ENCODE measurements at regions of chr2 and their contacts with region 1.

Region 1: DNA sequence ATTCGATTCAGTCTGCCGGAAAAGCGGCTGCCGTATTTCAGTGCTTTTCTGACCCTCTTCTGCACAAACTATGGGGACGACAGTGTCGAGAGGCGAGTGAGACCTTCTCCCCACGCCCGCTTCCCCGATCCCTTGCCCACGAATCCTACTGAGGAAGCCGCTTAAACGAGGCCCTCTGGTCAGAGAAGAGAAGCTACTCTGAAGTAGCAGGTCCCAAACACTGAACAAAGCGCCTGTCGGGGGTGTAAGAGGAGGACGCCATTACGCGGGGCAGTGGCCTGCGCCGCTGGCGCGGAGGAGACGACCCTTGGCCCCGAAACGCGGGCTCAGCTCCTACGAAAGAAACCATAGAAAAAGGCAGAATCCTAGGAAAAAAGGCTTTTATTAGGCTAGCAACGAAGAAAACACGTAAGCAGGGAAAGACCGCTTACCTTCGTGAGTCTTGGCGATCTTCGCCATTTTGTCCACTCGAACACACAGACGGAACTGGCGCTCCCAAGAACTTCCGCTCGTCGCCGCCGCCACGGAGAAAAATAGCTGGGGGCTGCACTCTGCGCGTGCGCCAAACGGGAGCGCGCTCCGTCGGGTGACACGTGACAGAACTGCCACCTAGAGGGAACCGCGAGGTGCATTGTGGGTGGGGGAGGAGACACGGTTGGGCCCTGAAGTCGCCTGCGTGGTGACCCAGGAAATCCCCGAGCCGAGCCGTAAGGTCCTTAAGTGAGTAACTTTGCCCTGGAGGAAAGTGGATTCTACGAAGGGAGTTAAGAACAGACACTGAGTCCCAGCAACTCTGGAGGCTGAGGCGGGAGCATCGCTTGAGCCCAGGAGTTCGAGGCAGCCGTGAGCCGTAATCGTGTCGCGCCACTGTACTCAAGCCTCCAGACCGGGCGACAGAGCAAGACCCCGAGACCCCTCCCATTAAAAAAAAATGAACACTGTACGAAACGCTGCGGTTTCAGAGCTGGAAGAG is at the start of gene SF3B1:
- DNase-seq: peak; percentile 99
- H3K4me3 ChIP-seq: peak within 1 kb of the TSS; percentile 77 to 97 (median 84)
- H3K27ac ChIP-seq: peak within 1 kb of the TSS; percentile 94 to 99 (median 98)
- H3K4me1 ChIP-seq: peaks cover 23 to 49% (median 38%) of the 10 kb centered on the region in 4 donors
- H3K27me3 ChIP-seq: no peaks in the 10 kb centered on the region
- CTCF ChIP-seq: no peak
- EP300 ChIP-seq: no peak
- POLR2A ChIP-seq: peak; percentile 96
- total RNA-seq, gene SF3B1: 282 to 531 (median 394) TPM

Region 2: GRCh38 chr2:197453161-197453914 is 18.5 kb after region 1 on chr2 and contains the start of gene COQ10B:
- in situ Hi-C with region 1: no loop called
- intact Hi-C with region 1: no loop called
- DNase-seq: peak; percentile 99
- H3K4me3 ChIP-seq: peak within 1 kb of the TSS; percentile 54 to 93 (median 88)
- H3K27ac ChIP-seq: peak within 1 kb of the TSS; percentile 93 to 100 (median 98)
- H3K4me1 ChIP-seq: peaks cover 10 to 34% (median 15%) of the 10 kb centered on the region in 4 donors
- H3K27me3 ChIP-seq: no peaks in the 10 kb centered on the region
- CTCF ChIP-seq: peak in 3 of 5 experiments; percentile 10 to 40 (median 29)
- EP300 ChIP-seq: peak; percentile 64
- POLR2A ChIP-seq: peak; percentile 97
- total RNA-seq, gene COQ10B: 10.1 to 80.8 (median 30.7) TPM

Region 3: DNA sequence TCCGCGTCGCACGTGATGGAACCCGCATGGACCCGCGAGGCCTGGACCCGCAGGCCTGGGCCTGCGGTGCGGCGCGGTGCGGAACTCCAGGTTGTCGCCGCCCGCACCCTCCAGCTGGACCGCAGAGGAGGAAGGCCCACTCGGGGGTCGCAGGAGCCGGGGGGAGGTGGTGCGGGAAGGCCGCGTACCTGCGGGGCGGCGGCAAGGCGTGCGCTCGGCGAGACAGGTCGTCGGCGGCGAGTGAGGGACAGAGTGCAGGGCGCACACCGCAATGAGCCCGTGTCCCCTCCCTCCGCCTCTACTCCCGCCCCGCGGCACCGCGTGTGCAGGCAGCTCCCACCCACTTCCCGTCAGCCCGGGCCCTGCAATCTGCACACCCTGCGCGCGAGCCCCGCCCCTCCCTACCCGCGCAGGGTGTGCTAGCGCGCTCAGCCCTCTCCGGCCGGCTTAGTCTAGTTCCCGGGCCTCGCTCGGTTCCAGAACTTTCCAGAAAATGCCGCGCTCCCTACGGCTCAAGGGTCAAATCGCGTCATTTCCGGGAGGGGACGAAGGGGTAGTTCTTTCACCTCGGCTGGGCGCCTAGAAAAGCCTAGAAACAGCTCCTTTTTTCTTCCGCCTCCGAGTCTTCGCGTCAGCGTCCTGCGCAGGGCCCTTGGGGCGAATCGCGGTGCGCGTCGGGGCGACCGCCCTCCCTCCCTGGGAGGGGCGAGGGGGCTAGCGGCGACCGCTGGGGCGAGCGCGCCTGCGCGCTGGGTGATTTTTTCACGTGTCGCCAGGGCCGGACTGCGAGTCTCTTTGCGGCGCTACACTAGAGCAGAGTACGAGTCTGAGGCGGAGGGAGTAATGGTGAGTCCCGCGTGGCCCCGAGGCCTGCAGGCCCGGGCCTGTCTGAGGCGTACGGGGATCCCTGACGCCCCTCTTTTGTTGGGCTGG is 65.0 kb after region 1 on chr2 and contains the starts of genes HSPD1 and HSPE1:
- in situ Hi-C with region 1: loop called in 1 of 4 experiments (anchors 10 kb)
- intact Hi-C with region 1: loop called (anchors 2 kb)
- DNase-seq: peak; percentile 99
- H3K4me3 ChIP-seq: peak within 1 kb of the TSS; percentile 86 to 99 (median 91)
- H3K27ac ChIP-seq: peak within 1 kb of the TSS; percentile 98 to 100 (median 99)
- H3K4me1 ChIP-seq: peaks cover 17 to 58% (median 42%) of the 10 kb centered on the region in 4 donors
- H3K27me3 ChIP-seq: no peaks in the 10 kb centered on the region
- CTCF ChIP-seq: peak in 1 of 5 experiments; percentile 9
- EP300 ChIP-seq: peak; percentile 92
- POLR2A ChIP-seq: peak; percentile 97
- total RNA-seq, gene HSPD1: 75.9 to 149 (median 108) TPM
- total RNA-seq, gene HSPE1: 3.4 to 151 (median 56.4) TPM

Measured in transverse colon (tissue), 4 donors.